ENCODE measurements at regions of chr4 and their contacts with region 1.

Region 1: DNA sequence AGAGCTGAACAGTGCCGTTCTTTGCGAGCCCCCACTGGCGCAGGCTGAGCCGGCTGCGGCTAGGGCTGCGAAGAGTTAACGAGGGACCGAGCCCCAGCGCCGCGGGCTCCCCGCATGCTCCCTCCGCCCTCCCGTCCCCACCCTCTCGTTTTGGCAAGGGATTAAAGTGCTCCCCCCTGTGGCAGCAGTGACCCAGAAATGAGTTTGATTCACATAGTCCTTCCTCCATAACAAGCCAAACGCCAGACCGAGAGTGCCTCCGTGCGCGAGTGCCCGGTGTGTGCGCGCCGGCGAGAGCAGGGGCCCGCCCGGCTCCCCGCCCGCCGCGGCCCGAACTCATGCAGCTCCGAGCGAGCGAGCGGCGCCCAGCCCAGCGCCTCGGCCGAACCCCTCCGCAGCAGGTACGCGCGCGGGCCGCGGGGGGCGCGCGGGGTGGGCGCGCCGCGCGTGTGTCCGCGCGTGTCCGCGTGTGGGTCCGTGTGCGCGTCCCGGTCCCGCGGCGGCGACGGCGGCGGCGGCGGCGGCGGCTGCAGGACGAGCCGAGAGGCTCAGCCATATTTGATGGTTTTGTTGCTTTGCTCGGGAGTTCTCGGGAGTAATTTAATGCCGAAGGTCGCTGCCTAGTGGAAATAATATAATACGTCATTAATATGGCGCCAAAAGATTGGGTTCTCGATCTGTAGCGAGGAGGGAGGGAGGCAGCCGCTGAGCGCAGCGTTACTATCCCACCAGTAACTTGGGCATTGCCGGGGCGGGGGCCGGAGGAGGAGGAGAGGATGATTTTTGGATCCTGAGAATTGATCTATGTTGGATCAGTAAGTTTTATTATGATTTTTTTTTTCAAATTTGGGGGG is at the start of gene JADE1:
- DNase-seq: peak; percentile 96
- ATAC-seq: peak; percentile 62
- H3K4me3 Mint-ChIP-seq: peak within 1 kb of the TSS; percentile 99
- H3K27ac Mint-ChIP-seq: peak within 1 kb of the TSS; percentile 100
- H3K4me1 Mint-ChIP-seq: peaks cover 12% of the 10 kb centered on the region
- H3K27me3 Mint-ChIP-seq: no peaks in the 10 kb centered on the region
- CTCF ChIP-seq: peak; percentile 48
- total RNA-seq, gene JADE1: 30.5 to 31.6 TPM

Region 2: DNA sequence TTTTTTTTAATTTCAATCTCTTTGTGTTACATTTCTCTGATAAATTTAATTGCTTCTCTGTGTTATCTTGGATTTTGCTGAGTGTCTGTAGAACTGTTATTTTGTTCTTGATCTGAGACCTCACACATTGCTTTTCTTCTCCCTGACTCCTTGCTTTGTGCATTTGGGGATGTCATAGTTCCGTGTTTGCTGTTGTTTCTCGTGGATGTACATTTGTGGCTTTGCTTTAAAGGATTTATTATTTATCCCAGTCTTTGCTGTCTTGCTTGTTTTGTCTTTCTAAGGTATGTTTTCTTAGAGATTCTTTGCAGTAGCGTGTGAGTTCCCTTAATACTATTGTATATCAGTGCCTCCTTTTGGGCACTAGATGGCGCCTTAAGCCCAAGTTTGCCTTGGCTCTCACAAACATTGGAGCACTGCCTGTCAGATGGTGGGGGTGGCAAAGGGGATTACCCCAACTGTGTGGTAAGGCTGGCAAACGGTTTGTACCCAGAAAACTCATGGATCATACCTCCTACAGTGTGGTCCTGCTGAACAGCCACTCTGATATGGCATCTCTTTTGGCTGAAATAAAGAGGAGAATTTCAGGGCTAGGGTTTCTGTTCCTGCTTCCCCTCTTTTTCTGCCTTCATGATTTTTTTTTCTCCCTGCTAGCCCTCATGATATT is 618.5 kb before region 1 on chr4:
- CTCF ChIA-PET with region 1: no interaction called
- POLR2A ChIA-PET with region 1: no interaction called
- intact Hi-C with region 1: loop called (anchors 10 kb)
- DNase-seq: peak; percentile 88
- ATAC-seq: peak; percentile 100
- H3K4me3 Mint-ChIP-seq: no peak overlapping the region
- H3K27ac Mint-ChIP-seq: no peak overlapping the region
- H3K4me1 Mint-ChIP-seq: no peaks in the 10 kb centered on the region
- H3K27me3 Mint-ChIP-seq: no peaks in the 10 kb centered on the region
- CTCF ChIP-seq: peak; percentile 87

Region 3: GRCh38 chr4:128454281-128455075 is 355.2 kb before region 1 on chr4:
- CTCF ChIA-PET with region 1: interaction called, 5 read pairs
- POLR2A ChIA-PET with region 1: interaction called, 3 read pairs
- intact Hi-C with region 1: loop called (anchors 10 kb)
- DNase-seq: peak; percentile 88
- ATAC-seq: peak; percentile 99
- H3K4me3 Mint-ChIP-seq: no peak overlapping the region
- H3K27ac Mint-ChIP-seq: no peak overlapping the region
- H3K4me1 Mint-ChIP-seq: peaks cover 12% of the 10 kb centered on the region
- H3K27me3 Mint-ChIP-seq: peaks cover 3% of the 10 kb centered on the region
- CTCF ChIP-seq: peak; percentile 67

Region 4: GRCh38 chr4:128854433-128854832 is 44.7 kb after region 1 on chr4:
- CTCF ChIA-PET with region 1: interaction called, 10 read pairs
- POLR2A ChIA-PET with region 1: interaction called, 13 read pairs
- intact Hi-C with region 1: no loop called
- DNase-seq: peak; percentile 34
- ATAC-seq: peak; percentile 94
- H3K4me3 Mint-ChIP-seq: peak overlapping the region; percentile 24
- H3K27ac Mint-ChIP-seq: peak overlapping the region; percentile 90
- H3K4me1 Mint-ChIP-seq: peaks cover 39% of the 10 kb centered on the region
- H3K27me3 Mint-ChIP-seq: no peaks in the 10 kb centered on the region
- CTCF ChIP-seq: no peak

Region 5: DNA sequence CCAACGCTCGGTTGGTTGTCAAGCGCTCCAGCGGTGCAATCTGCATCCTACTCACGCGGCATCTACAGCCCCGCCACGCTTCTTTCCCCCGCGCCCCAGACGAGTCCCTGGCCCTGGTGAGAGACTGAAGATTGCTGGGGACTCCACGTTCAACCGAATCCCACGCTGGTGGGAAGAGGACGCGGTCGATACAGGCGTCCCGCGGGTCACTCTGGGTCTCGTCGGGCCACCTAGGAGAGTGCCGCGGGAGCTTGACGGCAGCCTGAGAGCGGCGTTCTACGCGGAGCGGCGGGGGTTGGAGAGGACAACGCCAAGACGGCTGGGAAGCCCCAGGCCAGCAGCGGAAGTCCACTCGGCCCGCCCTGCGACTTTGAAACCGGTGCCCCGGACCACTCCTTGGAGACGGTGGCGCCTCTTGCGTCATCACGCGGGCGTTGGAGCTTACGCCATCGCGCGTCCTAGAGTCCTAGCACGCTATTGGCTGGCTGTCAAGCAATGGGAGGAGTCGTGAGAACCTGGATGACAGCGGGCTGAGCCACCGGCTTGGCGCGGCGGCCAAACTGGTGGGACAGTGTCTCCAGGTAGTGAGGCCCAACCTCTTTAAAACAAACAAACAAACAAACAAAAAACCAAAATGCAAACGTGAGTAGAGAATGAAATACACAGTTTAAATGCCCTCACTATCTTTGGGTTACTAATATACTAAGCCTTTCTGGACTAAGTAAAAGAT is 283.7 kb after region 1 on chr4 and contains the start of gene SCLT1:
- CTCF ChIA-PET with region 1: no interaction called
- POLR2A ChIA-PET with region 1: interaction called, 12 read pairs
- intact Hi-C with region 1: loop called (anchors 10 kb)
- DNase-seq: peak; percentile 99
- ATAC-seq: peak; percentile 92
- H3K4me3 Mint-ChIP-seq: no peak within 1 kb of the TSS
- H3K27ac Mint-ChIP-seq: peak within 1 kb of the TSS; percentile 32
- H3K4me1 Mint-ChIP-seq: peaks cover 39% of the 10 kb centered on the region
- H3K27me3 Mint-ChIP-seq: no peaks in the 10 kb centered on the region
- CTCF ChIP-seq: no peak
- total RNA-seq, gene SCLT1: 18.5 to 19.7 TPM

Measured in activated CD8-positive, alpha-beta T cell treated with anti-CD3 and anti-CD28 coated beads for 36 hours (primary cell).